CD14-positive monocyte (primary cell): ENCODE measurements at regions of chr15 and their contacts with region 1.

Region 1: GRCh38 chr15:79978655-79979514 is 7.9 kb upstream of the BCL2A1 start:
- DNase-seq: peak; percentile 89 to 97 (median 93)
- H3K4me3 ChIP-seq: peak overlapping the region in 1 of 3 experiments; percentile 48
- H3K4me3 Mint-ChIP-seq: peak overlapping the region; percentile 58 to 80
- H3K27ac ChIP-seq: peak overlapping the region; percentile 91 to 96
- H3K27ac Mint-ChIP-seq: peak overlapping the region; percentile 99 to 100 (median 100)
- H3K4me1 ChIP-seq: peaks cover 79 to 81% of the 10 kb centered on the region in 2 donors
- H3K4me1 Mint-ChIP-seq: peaks cover 78% of the 10 kb centered on the region
- H3K27me3 ChIP-seq: no peaks in the 10 kb centered on the region
- H3K27me3 Mint-ChIP-seq: peaks cover 0 to 11% (median 2%) of the 10 kb centered on the region in 3 donors
- CTCF ChIP-seq: no peak

Region 2: GRCh38 chr15:79896637-79897379 is 82.1 kb before region 1 on chr15 and contains the start of gene MTHFS:
- intact Hi-C with region 1: loop called (anchors 2 to 5 kb)
- DNase-seq: peak; percentile 72 to 78 (median 75)
- H3K4me3 ChIP-seq: peak within 1 kb of the TSS; percentile 47 to 86 (median 68)
- H3K4me3 Mint-ChIP-seq: peak within 1 kb of the TSS; percentile 99
- H3K27ac ChIP-seq: peak within 1 kb of the TSS; percentile 82 to 98
- H3K27ac Mint-ChIP-seq: peak within 1 kb of the TSS; percentile 94 to 100 (median 99)
- H3K4me1 ChIP-seq: peaks cover 49 to 69% of the 10 kb centered on the region in 2 donors
- H3K4me1 Mint-ChIP-seq: peaks cover 56% of the 10 kb centered on the region
- H3K27me3 ChIP-seq: no peaks in the 10 kb centered on the region
- H3K27me3 Mint-ChIP-seq: no peaks in the 10 kb centered on the region
- CTCF ChIP-seq: peak; percentile 54
- polyA plus RNA-seq, gene MTHFS: 44.6 to 129 (median 76.4) TPM

Region 3: DNA sequence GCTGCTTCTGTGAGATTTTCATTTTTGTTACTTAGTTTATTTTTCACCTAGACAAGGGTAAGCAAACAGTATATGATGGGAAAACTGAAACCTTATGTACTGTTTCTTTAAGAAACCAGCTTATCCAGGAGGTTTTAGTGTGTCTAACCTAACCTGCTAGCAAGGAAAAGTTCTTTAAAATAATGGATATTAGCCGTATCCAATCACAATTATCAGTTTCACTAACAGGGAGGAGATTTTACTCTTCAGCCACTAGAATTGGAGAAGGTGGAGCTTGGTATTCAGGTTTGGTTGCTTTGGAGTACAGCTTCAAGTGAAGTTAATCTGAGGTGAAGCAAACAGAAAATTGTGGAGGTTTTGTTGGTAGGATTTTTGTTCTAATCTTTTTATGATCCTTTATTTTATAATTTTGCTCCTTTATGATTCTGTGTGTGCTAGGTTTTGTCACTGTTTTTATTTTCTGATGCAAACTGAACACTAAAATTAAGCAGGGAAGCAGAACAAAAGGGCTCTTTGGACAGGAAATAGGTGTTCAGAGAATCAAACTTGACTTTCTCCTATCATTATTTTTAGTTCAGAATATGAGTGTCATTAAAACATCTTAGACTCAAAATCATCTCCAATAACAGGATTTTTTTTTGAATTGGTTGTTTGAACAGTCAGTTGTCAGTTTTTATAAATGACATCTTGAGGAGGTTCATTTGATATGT is 93.6 kb after region 1 on chr15:
- intact Hi-C with region 1: no loop called
- DNase-seq: peak in 2 of 3 donors; percentile 16 to 37
- H3K4me3 ChIP-seq: peak overlapping the region in 1 of 3 experiments; percentile 40
- H3K4me3 Mint-ChIP-seq: peak overlapping the region; percentile 39 to 82
- H3K27ac ChIP-seq: peak overlapping the region in 1 of 2 donors; percentile 33
- H3K27ac Mint-ChIP-seq: peak overlapping the region in 6 of 7 donors; percentile 28 to 70 (median 55)
- H3K4me1 ChIP-seq: peaks cover 7 to 27% of the 10 kb centered on the region in 2 donors
- H3K4me1 Mint-ChIP-seq: peaks cover 42% of the 10 kb centered on the region
- H3K27me3 ChIP-seq: no peaks in the 10 kb centered on the region
- H3K27me3 Mint-ChIP-seq: no peaks in the 10 kb centered on the region
- CTCF ChIP-seq: no peak